ENCODE measurements at regions of chr1 and their contacts with region 1.

Region 1: GRCh38 chr1:113904674-113905434 is at the starts of genes AP4B1 and DCLRE1B:
- DNase-seq: peak; percentile 93 to 99 (median 97)
- H3K4me3 ChIP-seq: peak within 1 kb of the TSS; percentile 96
- H3K4me3 Mint-ChIP-seq: peak within 1 kb of the TSS; percentile 93 to 100 (median 95)
- H3K27ac ChIP-seq: peak within 1 kb of the TSS; percentile 94
- H3K27ac Mint-ChIP-seq: peak within 1 kb of the TSS; percentile 95 to 100 (median 99)
- H3K4me1 ChIP-seq: peaks cover 34% of the 10 kb centered on the region
- H3K4me1 Mint-ChIP-seq: peaks cover 49 to 69% (median 58%) of the 10 kb centered on the region in 3 donors
- H3K27me3 ChIP-seq: no peaks in the 10 kb centered on the region
- H3K27me3 Mint-ChIP-seq: peaks cover 0 to 2% of the 10 kb centered on the region in 2 donors
- total RNA-seq, gene AP4B1: 33.7 to 36.2 TPM
- total RNA-seq, gene DCLRE1B: 31.2 to 32.1 TPM

Region 2: DNA sequence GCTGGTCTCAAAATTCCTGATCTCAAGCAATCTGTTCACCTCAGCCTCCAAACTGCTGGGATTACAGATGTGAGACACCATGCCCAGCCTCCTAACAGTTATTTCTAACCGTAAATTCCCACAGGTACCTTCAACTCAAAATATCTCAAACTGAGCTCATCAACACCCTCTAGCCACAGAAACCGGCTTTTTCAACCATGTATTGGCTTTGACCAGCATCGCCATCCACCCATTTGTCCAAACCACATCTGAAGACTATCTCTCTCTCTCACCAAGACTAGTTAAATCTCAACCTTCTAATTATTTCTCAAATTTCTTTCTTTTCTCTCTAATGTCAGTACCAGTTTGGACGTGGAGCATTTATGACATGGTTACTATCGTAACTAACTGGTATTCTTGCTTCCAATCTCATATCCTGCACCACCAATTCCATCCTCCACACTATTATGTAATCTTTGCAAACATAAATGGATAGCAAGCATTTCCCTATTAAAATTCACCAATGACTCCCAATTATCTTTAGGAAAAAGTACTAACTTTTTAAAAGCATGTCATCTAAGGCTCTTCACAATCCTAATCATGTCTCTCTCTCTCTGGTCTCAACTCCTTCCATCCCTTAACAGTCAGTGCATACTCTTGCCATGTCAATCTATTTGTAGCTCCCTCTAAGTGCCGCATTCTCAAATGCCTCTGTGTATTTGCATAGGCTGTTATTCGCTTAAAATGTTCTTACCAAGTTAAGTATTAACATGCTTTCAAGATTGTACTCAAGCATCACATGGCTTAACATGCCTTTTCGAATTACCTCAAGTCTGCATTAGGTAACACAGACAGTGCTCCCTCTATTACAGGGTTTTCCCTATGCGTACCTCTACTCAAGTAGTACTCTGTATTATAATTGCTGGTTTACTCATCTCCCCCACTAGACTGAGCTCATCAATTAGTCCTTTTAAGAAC is 110.7 kb before region 1 on chr1:
- CTCF ChIA-PET with region 1: no interaction called
- POLR2A ChIA-PET with region 1: no interaction called
- DNase-seq: no peak
- H3K4me3 ChIP-seq: no peak overlapping the region
- H3K4me3 Mint-ChIP-seq: peak overlapping the region in 1 of 7 donors; percentile 34
- H3K27ac ChIP-seq: no peak overlapping the region
- H3K27ac Mint-ChIP-seq: peak overlapping the region; percentile 6 to 92 (median 54)
- H3K4me1 ChIP-seq: peaks cover 36% of the 10 kb centered on the region
- H3K4me1 Mint-ChIP-seq: peaks cover 68 to 92% (median 83%) of the 10 kb centered on the region in 3 donors
- H3K27me3 ChIP-seq: no peaks in the 10 kb centered on the region
- H3K27me3 Mint-ChIP-seq: no peaks in the 10 kb centered on the region

Region 3: DNA sequence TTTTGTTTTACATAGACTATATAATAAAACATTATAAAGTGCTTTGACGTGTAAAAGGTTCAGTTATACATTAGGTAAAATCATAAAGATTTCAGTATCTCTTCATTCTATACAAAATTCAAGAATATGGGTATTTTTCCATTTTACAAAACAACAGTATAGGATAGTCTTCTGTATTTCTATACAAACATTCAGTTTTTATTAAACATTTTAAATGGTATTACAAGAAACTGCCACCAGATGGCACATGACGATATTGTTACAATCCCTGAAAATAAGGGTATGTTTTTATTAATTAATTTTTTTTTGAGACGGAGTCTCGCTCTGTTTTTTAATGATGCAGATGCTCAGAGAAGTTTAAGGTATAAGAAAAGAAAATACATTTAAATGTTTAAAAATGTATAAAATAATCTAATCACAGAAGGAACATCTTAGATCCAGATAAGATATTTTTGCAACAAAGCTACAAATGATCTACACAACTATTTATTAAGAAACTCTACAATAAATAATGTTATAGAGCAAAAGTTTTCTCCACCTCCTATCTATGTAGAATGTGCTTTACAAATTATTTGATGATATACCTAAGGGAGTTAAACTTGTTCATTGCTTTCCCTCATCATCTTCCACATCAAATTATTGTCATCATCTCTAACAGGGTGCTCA is 69.1 kb before region 1 on chr1:
- CTCF ChIA-PET with region 1: interaction called, 35 read pairs
- POLR2A ChIA-PET with region 1: interaction called, 14 read pairs
- DNase-seq: peak in 3 of 5 donors; percentile 3 to 59 (median 47)
- H3K4me3 ChIP-seq: no peak overlapping the region
- H3K4me3 Mint-ChIP-seq: no peak overlapping the region
- H3K27ac ChIP-seq: no peak overlapping the region
- H3K27ac Mint-ChIP-seq: peak overlapping the region in 6 of 8 donors; percentile 6 to 71 (median 54)
- H3K4me1 ChIP-seq: no peaks in the 10 kb centered on the region
- H3K4me1 Mint-ChIP-seq: peaks cover 9 to 14% (median 10%) of the 10 kb centered on the region in 3 donors
- H3K27me3 ChIP-seq: no peaks in the 10 kb centered on the region
- H3K27me3 Mint-ChIP-seq: no peaks in the 10 kb centered on the region

Region 4: DNA sequence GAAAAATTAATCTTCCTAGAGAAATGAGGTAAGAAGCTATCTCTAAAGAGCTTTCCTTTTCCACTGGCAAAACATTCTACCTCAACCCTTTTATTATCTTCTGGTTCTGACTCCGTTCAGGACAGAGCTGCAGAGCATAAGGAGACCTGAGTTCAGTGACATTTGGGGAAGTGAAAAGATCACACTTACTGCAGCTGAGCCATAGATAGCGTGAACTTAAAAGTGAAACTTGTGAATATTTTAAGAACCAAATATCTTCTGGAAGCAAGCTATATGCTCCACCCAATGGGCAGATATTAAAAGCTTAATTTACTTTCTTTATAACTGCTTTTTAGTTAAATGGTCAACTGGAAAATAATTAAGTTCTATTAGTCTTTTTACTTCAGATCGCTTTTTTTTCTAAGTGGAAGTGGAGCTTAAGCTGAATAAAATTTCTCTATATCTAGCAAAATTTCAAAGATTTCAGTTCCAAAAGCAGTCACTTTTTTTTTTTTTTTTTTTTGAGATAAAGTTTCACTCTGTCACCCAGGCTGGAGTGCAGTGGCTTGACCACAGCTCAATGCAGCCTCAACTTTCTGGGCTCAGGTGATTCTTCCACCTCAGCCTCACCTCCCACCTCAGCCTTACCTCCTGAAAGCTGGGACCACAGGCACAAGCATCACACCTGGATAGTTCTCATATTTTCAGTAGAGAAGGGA is 45.2 kb before region 1 on chr1:
- CTCF ChIA-PET with region 1: interaction called, 15 read pairs
- POLR2A ChIA-PET with region 1: no interaction called
- DNase-seq: no peak
- H3K4me3 ChIP-seq: no peak overlapping the region
- H3K4me3 Mint-ChIP-seq: peak overlapping the region in 6 of 7 donors; percentile 1 to 75 (median 62)
- H3K27ac ChIP-seq: peak overlapping the region; percentile 11
- H3K27ac Mint-ChIP-seq: peak overlapping the region; percentile 77 to 90 (median 82)
- H3K4me1 ChIP-seq: peaks cover 20% of the 10 kb centered on the region
- H3K4me1 Mint-ChIP-seq: peaks cover 38 to 59% (median 54%) of the 10 kb centered on the region in 3 donors
- H3K27me3 ChIP-seq: no peaks in the 10 kb centered on the region
- H3K27me3 Mint-ChIP-seq: no peaks in the 10 kb centered on the region

Region 5: GRCh38 chr1:113874012-113874879 is 30.6 kb before region 1 on chr1:
- CTCF ChIA-PET with region 1: interaction called, 16 read pairs
- POLR2A ChIA-PET with region 1: interaction called, 14 read pairs
- DNase-seq: peak in 2 of 5 donors; percentile 17 to 52
- H3K4me3 ChIP-seq: no peak overlapping the region
- H3K4me3 Mint-ChIP-seq: peak overlapping the region; percentile 13 to 69 (median 52)
- H3K27ac ChIP-seq: no peak overlapping the region
- H3K27ac Mint-ChIP-seq: peak overlapping the region; percentile 81 to 97 (median 88)
- H3K4me1 ChIP-seq: peaks cover 59% of the 10 kb centered on the region
- H3K4me1 Mint-ChIP-seq: peaks cover 69 to 90% (median 84%) of the 10 kb centered on the region in 3 donors
- H3K27me3 ChIP-seq: no peaks in the 10 kb centered on the region
- H3K27me3 Mint-ChIP-seq: no peaks in the 10 kb centered on the region

Region 6: GRCh38 chr1:113881661-113882060 is 23.2 kb before region 1 on chr1:
- CTCF ChIA-PET with region 1: interaction called, 16 read pairs
- POLR2A ChIA-PET with region 1: interaction called, 14 read pairs
- DNase-seq: no peak
- H3K4me3 ChIP-seq: no peak overlapping the region
- H3K4me3 Mint-ChIP-seq: no peak overlapping the region
- H3K27ac ChIP-seq: no peak overlapping the region
- H3K27ac Mint-ChIP-seq: peak overlapping the region in 1 of 8 donors; percentile 54
- H3K4me1 ChIP-seq: peaks cover 36% of the 10 kb centered on the region
- H3K4me1 Mint-ChIP-seq: peaks cover 40 to 61% (median 61%) of the 10 kb centered on the region in 3 donors
- H3K27me3 ChIP-seq: no peaks in the 10 kb centered on the region
- H3K27me3 Mint-ChIP-seq: no peaks in the 10 kb centered on the region

Region 7: GRCh38 chr1:113982033-113982931 is 77.4 kb after region 1 on chr1:
- CTCF ChIA-PET with region 1: no interaction called
- POLR2A ChIA-PET with region 1: no interaction called
- DNase-seq: no peak
- H3K4me3 ChIP-seq: no peak overlapping the region
- H3K4me3 Mint-ChIP-seq: no peak overlapping the region
- H3K27ac ChIP-seq: no peak overlapping the region
- H3K27ac Mint-ChIP-seq: peak overlapping the region in 2 of 8 donors; percentile 59 to 95
- H3K4me1 ChIP-seq: no peaks in the 10 kb centered on the region
- H3K4me1 Mint-ChIP-seq: peaks cover 8 to 17% (median 14%) of the 10 kb centered on the region in 3 donors
- H3K27me3 ChIP-seq: no peaks in the 10 kb centered on the region
- H3K27me3 Mint-ChIP-seq: peaks cover 0 to 5% of the 10 kb centered on the region in 2 donors

Measured in CD8-positive, alpha-beta memory T cell (primary cell).